Panc1 (cell line): ENCODE measurements at regions of chr20 and their contacts with region 1.

Region 1: GRCh38 chr20:5448449-5449118 is 131.8 kb upstream of the PROKR2 start:
- DNase-seq: peak; percentile 41
- ATAC-seq: peak; percentile 85
- H3K4me3 ChIP-seq: no peak overlapping the region
- H3K27ac ChIP-seq: no peak overlapping the region
- H3K4me1 ChIP-seq: no peaks in the 10 kb centered on the region
- H3K27me3 ChIP-seq: peaks cover 4% of the 10 kb centered on the region
- CTCF ChIP-seq: peak; percentile 85

Region 2: GRCh38 chr20:5205348-5206210 is 243.0 kb before region 1 on chr20:
- CTCF ChIA-PET with region 1: interaction called, 10 read pairs
- POLR2A ChIA-PET with region 1: no interaction called
- in situ Hi-C with region 1: no loop called
- intact Hi-C with region 1: loop called (anchors 1 kb)
- DNase-seq: peak; percentile 51
- ATAC-seq: peak; percentile 100
- H3K4me3 ChIP-seq: no peak overlapping the region
- H3K27ac ChIP-seq: no peak overlapping the region
- H3K4me1 ChIP-seq: no peaks in the 10 kb centered on the region
- H3K27me3 ChIP-seq: no peaks in the 10 kb centered on the region
- CTCF ChIP-seq: peak; percentile 94